T-cell (primary cell): ENCODE measurements at regions of chr13 and their contacts with region 1.

Region 1: GRCh38 chr13:77176350-77176749 is 149.4 kb upstream of the FBXL3 start:
- DNase-seq: no peak
- ATAC-seq: no peak
- H3K4me3 ChIP-seq: no peak overlapping the region
- H3K4me3 Mint-ChIP-seq: no peak overlapping the region
- H3K27ac ChIP-seq: no peak overlapping the region
- H3K27ac Mint-ChIP-seq: no peak overlapping the region
- H3K4me1 ChIP-seq: no peaks in the 10 kb centered on the region
- H3K4me1 Mint-ChIP-seq: peaks cover 0 to 7% (median 2%) of the 10 kb centered on the region in 3 donors
- H3K27me3 ChIP-seq: no peaks in the 10 kb centered on the region
- H3K27me3 Mint-ChIP-seq: no peaks in the 10 kb centered on the region

Region 2: GRCh38 chr13:77048681-77049080 is 127.7 kb before region 1 on chr13:
- CTCF ChIA-PET with region 1: no interaction called
- POLR2A ChIA-PET with region 1: interaction called in 1 of 2 experiments, 14 read pairs
- DNase-seq: no peak
- ATAC-seq: no peak
- H3K4me3 ChIP-seq: no peak overlapping the region
- H3K4me3 Mint-ChIP-seq: no peak overlapping the region
- H3K27ac ChIP-seq: no peak overlapping the region
- H3K27ac Mint-ChIP-seq: peak overlapping the region; percentile 32 to 59
- H3K4me1 ChIP-seq: no peaks in the 10 kb centered on the region
- H3K4me1 Mint-ChIP-seq: peaks cover 0 to 11% (median 0%) of the 10 kb centered on the region in 3 donors
- H3K27me3 ChIP-seq: no peaks in the 10 kb centered on the region
- H3K27me3 Mint-ChIP-seq: no peaks in the 10 kb centered on the region

Region 3: GRCh38 chr13:77114283-77114682 is 62.1 kb before region 1 on chr13:
- CTCF ChIA-PET with region 1: no interaction called
- POLR2A ChIA-PET with region 1: interaction called in 1 of 2 experiments, 12 read pairs
- DNase-seq: no peak
- ATAC-seq: no peak
- H3K4me3 ChIP-seq: no peak overlapping the region
- H3K4me3 Mint-ChIP-seq: no peak overlapping the region
- H3K27ac ChIP-seq: no peak overlapping the region
- H3K27ac Mint-ChIP-seq: no peak overlapping the region
- H3K4me1 ChIP-seq: no peaks in the 10 kb centered on the region
- H3K4me1 Mint-ChIP-seq: no peaks in the 10 kb centered on the region
- H3K27me3 ChIP-seq: no peaks in the 10 kb centered on the region
- H3K27me3 Mint-ChIP-seq: no peaks in the 10 kb centered on the region